ENCODE measurements at regions of chr5 and their contacts with region 1.

Region 1: GRCh38 chr5:14011089-14012004 is 66.9 kb upstream of the DNAH5 start:
- DNase-seq: peak; percentile 86
- ATAC-seq: peak; percentile 86
- H3K4me3 ChIP-seq: peak overlapping the region; percentile 71
- H3K27ac ChIP-seq: peak overlapping the region; percentile 91
- H3K4me1 ChIP-seq: peaks cover 19% of the 10 kb centered on the region
- H3K27me3 ChIP-seq: no peaks in the 10 kb centered on the region
- CTCF ChIP-seq: peak; percentile 24; the same call in 1 of the 2 replicates
- POLR2A ChIP-seq: peak; percentile 72; the same call in 1 of the 2 replicates
- RAD21 ChIP-seq: peak; percentile 30

Region 2: DNA sequence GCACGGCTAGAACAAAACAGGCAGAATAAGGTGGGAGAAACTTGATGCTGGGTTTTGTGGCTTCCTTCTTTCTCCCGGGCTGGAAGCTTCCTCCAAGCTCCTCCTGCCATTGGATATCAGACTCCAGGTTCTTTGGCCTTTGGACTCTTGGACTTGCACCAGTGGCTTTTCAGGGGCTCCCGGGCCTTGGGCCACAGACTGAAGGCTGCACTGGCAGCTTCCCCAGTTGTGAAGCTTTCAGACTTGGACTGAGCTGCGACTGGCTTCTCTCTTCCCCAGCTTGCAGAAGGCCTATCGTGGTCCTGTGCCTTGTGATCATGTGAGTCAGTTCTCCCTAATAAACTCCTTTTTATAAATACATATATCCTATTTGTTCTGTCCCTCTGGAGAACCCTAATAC is 431.3 kb before region 1 on chr5:
- CTCF ChIA-PET with region 1: no interaction called
- POLR2A ChIA-PET with region 1: no interaction called
- dilution Hi-C with region 1: no loop called
- in situ Hi-C with region 1: no loop called
- intact Hi-C with region 1: no loop called
- DNase-seq: no peak
- ATAC-seq: no peak
- H3K4me3 ChIP-seq: no peak overlapping the region
- H3K27ac ChIP-seq: no peak overlapping the region
- H3K4me1 ChIP-seq: no peaks in the 10 kb centered on the region
- H3K27me3 ChIP-seq: no peaks in the 10 kb centered on the region
- CTCF ChIP-seq: no peak
- POLR2A ChIP-seq: no peak
- RAD21 ChIP-seq: no peak

Region 3: GRCh38 chr5:14025569-14026286 is 14.4 kb after region 1 on chr5:
- CTCF ChIA-PET with region 1: interaction called, 10 read pairs
- POLR2A ChIA-PET with region 1: no interaction called
- dilution Hi-C with region 1: no loop called
- in situ Hi-C with region 1: no loop called
- intact Hi-C with region 1: no loop called
- DNase-seq: peak; percentile 10
- ATAC-seq: peak; percentile 42; the same call in 1 of the 2 replicates
- H3K4me3 ChIP-seq: no peak overlapping the region
- H3K27ac ChIP-seq: peak overlapping the region; percentile 83
- H3K4me1 ChIP-seq: peaks cover 8% of the 10 kb centered on the region
- H3K27me3 ChIP-seq: no peaks in the 10 kb centered on the region
- CTCF ChIP-seq: no peak
- POLR2A ChIP-seq: no peak
- RAD21 ChIP-seq: no peak

Region 4: DNA sequence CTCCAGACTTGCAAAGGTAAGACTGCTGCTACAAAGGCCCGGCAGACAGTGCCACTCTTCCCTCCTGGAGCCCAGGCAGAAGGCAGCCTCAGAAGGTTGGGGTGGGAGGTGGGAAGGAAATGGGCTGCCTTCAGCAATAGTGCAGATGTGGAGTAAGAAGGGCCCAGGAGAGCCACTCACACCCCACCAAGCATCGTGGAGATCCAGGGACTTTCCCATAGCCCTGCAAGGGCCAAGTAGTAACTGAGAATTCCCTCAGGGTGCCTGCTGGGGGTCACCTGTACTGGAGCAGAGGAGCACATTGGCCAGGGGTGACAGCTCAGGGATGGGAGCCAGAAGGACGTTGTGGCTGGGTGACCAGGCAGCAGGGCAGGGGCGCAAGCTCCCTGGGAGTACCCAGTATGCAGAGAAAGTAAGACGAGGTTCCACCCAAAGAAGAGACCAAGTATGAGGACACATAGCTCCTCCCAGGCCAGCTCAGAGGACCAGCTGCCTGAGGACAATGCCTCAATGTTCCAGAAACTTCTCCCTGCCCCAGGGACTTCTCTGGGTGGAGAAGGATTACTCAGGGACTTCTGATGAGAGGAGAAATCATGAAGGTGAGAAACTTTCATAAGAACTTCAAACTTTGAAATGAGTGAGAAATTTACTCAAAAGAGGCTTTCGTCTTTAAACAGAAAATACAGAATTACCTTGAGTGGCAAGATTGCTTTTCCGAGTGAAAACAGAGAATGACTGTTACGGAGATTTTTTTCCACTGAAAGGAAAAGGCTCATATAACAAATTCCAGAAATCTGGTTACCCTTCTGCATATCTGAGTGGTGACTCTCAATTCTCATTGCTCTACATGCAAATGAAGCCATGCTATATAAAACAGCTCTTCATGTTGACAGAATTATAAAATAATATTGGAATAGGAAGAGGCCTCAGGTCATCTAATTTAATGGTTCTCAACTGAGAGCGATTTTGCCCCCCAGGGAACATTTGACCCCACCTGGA is 43.9 kb after region 1 on chr5:
- CTCF ChIA-PET with region 1: interaction called, 3 read pairs
- POLR2A ChIA-PET with region 1: no interaction called
- dilution Hi-C with region 1: no loop called
- in situ Hi-C with region 1: no loop called
- intact Hi-C with region 1: loop called (anchors 5 kb)
- DNase-seq: peak; percentile 81
- ATAC-seq: peak; percentile 51
- H3K4me3 ChIP-seq: no peak overlapping the region; the same call in 1 of the 2 replicates
- H3K27ac ChIP-seq: peak overlapping the region; percentile 100
- H3K4me1 ChIP-seq: peaks cover 24% of the 10 kb centered on the region
- H3K27me3 ChIP-seq: no peaks in the 10 kb centered on the region
- CTCF ChIP-seq: no peak
- POLR2A ChIP-seq: no peak
- RAD21 ChIP-seq: no peak

Region 5: DNA sequence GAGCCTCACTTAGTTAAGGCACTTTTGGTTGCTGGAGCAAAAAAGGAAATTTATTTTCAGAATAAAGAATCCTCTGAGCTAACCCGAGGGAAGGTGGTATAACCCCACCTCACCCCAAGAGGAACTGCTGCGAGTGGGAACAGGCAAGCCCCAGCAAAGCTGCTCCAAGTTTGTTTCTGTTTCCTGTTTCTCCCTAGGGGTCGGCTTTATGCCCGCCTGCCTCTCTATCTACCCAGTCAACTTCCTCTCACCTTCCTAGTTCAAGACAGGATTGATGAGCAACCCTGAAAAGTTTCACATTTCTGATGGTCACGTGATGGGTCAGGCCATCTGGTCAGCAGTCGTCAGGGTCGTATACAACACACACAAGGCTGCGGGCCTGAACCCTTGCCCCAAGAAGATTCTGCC is 162.9 kb after region 1 on chr5:
- CTCF ChIA-PET with region 1: no interaction called
- POLR2A ChIA-PET with region 1: no interaction called
- dilution Hi-C with region 1: no loop called
- in situ Hi-C with region 1: no loop called
- intact Hi-C with region 1: no loop called
- DNase-seq: peak; percentile 56
- ATAC-seq: no peak
- H3K4me3 ChIP-seq: no peak overlapping the region
- H3K27ac ChIP-seq: peak overlapping the region; percentile 91
- H3K4me1 ChIP-seq: peaks cover 43% of the 10 kb centered on the region
- H3K27me3 ChIP-seq: no peaks in the 10 kb centered on the region
- CTCF ChIP-seq: no peak
- POLR2A ChIP-seq: no peak
- RAD21 ChIP-seq: no peak

Region 6: DNA sequence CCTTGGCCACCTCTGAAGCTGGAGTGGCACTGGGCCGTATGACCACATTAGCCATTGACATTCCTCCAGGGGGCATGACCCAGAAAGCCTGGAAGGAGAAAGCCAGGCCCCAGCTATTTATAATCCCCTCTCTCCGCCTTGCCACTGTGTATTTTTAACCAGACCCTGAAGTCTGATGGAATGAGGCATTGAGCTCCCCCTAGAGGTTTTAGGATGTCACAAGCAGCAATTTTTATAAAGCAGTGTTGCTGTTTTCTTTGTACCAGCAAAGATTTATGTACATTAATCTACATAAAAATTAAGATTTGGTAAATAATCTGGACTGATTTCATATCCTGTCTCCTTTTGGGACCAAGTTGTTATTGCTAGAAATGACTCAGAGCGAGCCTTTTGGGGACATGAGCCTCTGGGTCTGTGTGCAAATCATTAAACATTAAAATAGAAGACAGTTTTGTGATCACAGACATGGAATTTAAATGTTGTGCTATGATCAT is 258.9 kb after region 1 on chr5:
- CTCF ChIA-PET with region 1: no interaction called
- POLR2A ChIA-PET with region 1: no interaction called
- dilution Hi-C with region 1: no loop called
- in situ Hi-C with region 1: no loop called
- intact Hi-C with region 1: loop called (anchors 5 kb)
- DNase-seq: peak; percentile 64
- ATAC-seq: peak; percentile 52
- H3K4me3 ChIP-seq: no peak overlapping the region
- H3K27ac ChIP-seq: peak overlapping the region; percentile 89
- H3K4me1 ChIP-seq: peaks cover 34% of the 10 kb centered on the region
- H3K27me3 ChIP-seq: no peaks in the 10 kb centered on the region
- CTCF ChIP-seq: peak; percentile 76
- POLR2A ChIP-seq: no peak
- RAD21 ChIP-seq: peak; percentile 71

Region 7: GRCh38 chr5:14405267-14405666 is 393.9 kb after region 1 on chr5:
- CTCF ChIA-PET with region 1: no interaction called
- POLR2A ChIA-PET with region 1: interaction called, 13 read pairs
- dilution Hi-C with region 1: no loop called
- in situ Hi-C with region 1: no loop called
- intact Hi-C with region 1: no loop called
- DNase-seq: no peak
- ATAC-seq: no peak
- H3K4me3 ChIP-seq: no peak overlapping the region
- H3K27ac ChIP-seq: peak overlapping the region; percentile 10; the same call in 1 of the 2 replicates
- H3K4me1 ChIP-seq: peaks cover 25% of the 10 kb centered on the region
- H3K27me3 ChIP-seq: no peaks in the 10 kb centered on the region
- CTCF ChIP-seq: peak; percentile 12; the same call in 1 of the 2 replicates
- POLR2A ChIP-seq: no peak
- RAD21 ChIP-seq: no peak

Measured in IMR-90 (cell line).